Ovary (tissue), 10 donors: ENCODE measurements at regions of chr4 and their contacts with region 1.

Region 1: DNA sequence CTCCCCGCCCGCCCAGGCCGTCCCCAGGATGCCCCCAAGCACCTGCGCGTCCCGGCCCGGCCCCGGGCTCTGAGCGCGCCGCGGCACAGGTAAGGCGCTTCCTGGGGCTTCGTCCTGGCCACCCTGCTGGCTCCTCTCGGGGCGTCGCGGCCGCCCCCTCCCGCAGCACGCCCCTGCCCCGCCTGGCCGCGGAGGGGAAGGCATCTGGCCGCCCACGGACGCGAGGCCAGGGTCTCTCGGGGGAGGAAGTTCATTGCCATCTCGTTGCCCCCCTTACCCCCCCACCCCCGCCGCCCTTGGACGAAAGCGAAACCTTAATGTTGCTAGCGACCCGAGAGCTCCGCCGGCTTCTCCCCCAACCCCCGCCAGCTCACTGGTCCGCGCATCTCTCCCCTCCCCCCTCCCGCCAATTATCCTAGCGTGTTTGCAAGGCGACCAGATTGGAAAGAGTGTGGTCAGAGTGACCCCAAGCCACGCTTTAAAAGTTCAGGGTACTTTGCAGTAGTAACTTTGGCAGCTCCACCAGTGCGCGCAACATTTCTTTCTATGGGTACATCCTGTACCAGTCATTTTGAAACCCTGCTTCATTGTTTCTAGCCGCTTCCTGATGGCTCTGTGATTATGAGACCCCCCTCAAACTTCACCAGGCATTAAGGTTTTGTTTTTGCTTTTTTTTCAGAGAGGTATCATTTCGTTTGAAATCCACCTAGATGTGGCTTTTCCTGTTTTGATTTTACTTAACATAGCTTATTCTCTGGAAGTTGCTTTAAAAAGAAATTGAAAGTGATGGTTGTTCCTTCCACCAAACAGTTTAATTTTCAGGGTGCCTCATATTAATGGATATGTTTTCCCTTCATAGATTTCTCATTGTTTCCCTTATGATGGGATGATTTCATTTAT is 626 bp downstream of the TBC1D1 start:
- DNase-seq: peak in 4 of 5 donors; percentile 30 to 58 (median 52)
- H3K4me3 ChIP-seq: peak overlapping the region; percentile 77
- H3K27ac ChIP-seq: peak overlapping the region; percentile 72 to 90
- H3K4me1 ChIP-seq: no peaks in the 10 kb centered on the region
- H3K27me3 ChIP-seq: no peaks in the 10 kb centered on the region
- CTCF ChIP-seq: no peak
- EP300 ChIP-seq: no peak
- POLR2A ChIP-seq: no peak

Region 2: DNA sequence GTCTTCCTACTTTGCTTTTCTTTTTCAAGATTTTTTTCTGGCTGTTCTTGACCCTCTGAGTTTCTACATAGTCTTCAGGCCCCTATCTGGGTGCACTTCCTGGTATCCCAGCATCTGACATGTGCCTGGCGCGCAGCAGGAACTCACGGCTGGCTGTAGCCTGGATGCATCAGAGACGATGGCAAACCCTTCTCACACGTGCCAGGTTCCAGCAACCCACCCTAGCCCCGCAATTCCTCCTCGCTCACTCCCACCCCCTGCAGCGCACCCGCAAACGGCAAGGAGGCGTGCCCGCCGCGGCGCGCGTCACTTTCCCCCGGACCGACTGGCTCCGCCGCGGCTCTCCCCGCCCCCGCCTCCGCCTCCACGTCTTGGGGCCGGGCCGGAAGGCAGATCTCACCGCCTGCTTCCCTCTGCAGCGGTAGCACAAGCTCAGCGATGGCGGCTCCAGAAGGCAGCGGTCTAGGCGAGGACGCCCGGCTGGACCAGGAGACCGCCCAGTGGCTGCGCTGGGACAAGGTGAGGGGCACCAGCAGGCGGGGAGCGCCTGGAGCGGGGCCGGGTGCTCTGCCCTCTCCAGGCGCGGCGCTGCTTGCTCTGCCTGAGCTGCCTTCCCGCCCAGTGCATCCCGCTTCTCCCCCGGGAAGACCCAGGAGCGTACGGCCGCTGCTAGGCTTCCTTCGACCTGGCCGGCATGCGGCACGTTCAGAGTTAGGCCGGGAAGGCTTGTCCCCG is 65.0 kb before region 1 on chr4 and contains the start of gene PGM2:
- intact Hi-C with region 1: loop called in 2 of 4 experiments (anchors 5 to 10 kb)
- DNase-seq: peak; percentile 81 to 91 (median 86)
- H3K4me3 ChIP-seq: peak within 1 kb of the TSS; percentile 75
- H3K27ac ChIP-seq: peak within 1 kb of the TSS; percentile 59 to 82
- H3K4me1 ChIP-seq: peaks cover 8% of the 10 kb centered on the region
- H3K27me3 ChIP-seq: no peaks in the 10 kb centered on the region
- CTCF ChIP-seq: peak in 1 of 3 donors; percentile 16
- EP300 ChIP-seq: no peak
- POLR2A ChIP-seq: peak; percentile 52
- total RNA-seq, gene PGM2: 11.8 to 31.2 (median 22.2) TPM

Region 3: GRCh38 chr4:37977471-37978247 is 86.1 kb after region 1 on chr4:
- intact Hi-C with region 1: loop called in 1 of 4 experiments (anchors 2 kb)
- DNase-seq: peak; percentile 63 to 80 (median 75)
- H3K4me3 ChIP-seq: peak overlapping the region; percentile 55
- H3K27ac ChIP-seq: peak overlapping the region; percentile 86 to 92
- H3K4me1 ChIP-seq: peaks cover 7% of the 10 kb centered on the region
- H3K27me3 ChIP-seq: no peaks in the 10 kb centered on the region
- CTCF ChIP-seq: peak; percentile 52 to 55 (median 53)
- EP300 ChIP-seq: no peak
- POLR2A ChIP-seq: peak; percentile 10